ENCODE measurements at regions of chr12 and their contacts with region 1.

Region 1: GRCh38 chr12:15563663-15564062 is 225.5 kb downstream of the EPS8 start:
- DNase-seq: no peak
- H3K4me3 ChIP-seq: no peak overlapping the region
- H3K27ac ChIP-seq: no peak overlapping the region
- H3K4me1 ChIP-seq: no peaks in the 10 kb centered on the region
- H3K27me3 ChIP-seq: no peaks in the 10 kb centered on the region
- CTCF ChIP-seq: no peak

Region 2: GRCh38 chr12:14394317-14395073 is 1169.2 kb before region 1 on chr12:
- CTCF ChIA-PET with region 1: no interaction called
- POLR2A ChIA-PET with region 1: interaction called, 10 read pairs
- intact Hi-C with region 1: no loop called
- DNase-seq: no peak
- H3K4me3 ChIP-seq: no peak overlapping the region
- H3K27ac ChIP-seq: no peak overlapping the region
- H3K4me1 ChIP-seq: no peaks in the 10 kb centered on the region
- H3K27me3 ChIP-seq: no peaks in the 10 kb centered on the region
- CTCF ChIP-seq: no peak

Measured in PC-9 (cell line).